ENCODE measurements at regions of chr12 and their contacts with region 1.

Region 1: GRCh38 chr12:122265931-122266771 is at the start of gene VPS33A:
- DNase-seq: peak; percentile 91
- ATAC-seq: peak; percentile 97
- H3K4me3 ChIP-seq: peak within 1 kb of the TSS; percentile 74
- H3K27ac ChIP-seq: peak within 1 kb of the TSS; percentile 84
- H3K4me1 ChIP-seq: 0 out of 2 replicates have a peak, but pooled peaks cover 4% of the 10 kb centered on the region
- H3K27me3 ChIP-seq: no peaks in the 10 kb centered on the region
- CTCF ChIP-seq: no peak
- EP300 ChIP-seq: no peak
- POLR2A ChIP-seq: peak; percentile 97
- RAD21 ChIP-seq: peak; percentile 16; the same call in 1 of the 2 replicates
- polyA plus RNA-seq, gene VPS33A: 7.7 to 8.7 TPM

Region 2: DNA sequence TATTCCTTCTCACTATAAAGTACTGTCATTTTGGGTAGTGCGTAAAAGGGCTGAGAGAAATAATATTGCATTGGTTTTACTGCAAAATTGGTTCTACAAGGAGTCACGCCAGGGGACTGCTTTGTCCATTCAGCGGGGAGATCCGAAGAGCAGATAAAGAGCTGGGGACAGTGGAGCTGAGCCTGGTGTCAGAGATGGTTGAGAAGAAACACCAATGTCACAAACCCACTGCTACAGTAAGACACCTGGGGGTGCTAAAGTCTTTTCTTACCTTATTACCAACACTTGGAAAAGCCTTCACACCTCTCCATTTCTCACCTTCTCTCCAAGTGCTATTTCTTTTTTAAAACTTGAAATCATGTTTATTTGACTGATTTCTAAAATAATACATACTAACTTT is 106.3 kb before region 1 on chr12:
- CTCF ChIA-PET with region 1: no interaction called
- POLR2A ChIA-PET with region 1: no interaction called
- RAD21 ChIA-PET with region 1: no interaction called
- SMC1A ChIA-PET with region 1: no interaction called
- in situ Hi-C with region 1: no loop called
- intact Hi-C with region 1: no loop called
- DNase-seq: no peak
- ATAC-seq: no peak
- H3K4me3 ChIP-seq: no peak overlapping the region
- H3K27ac ChIP-seq: no peak overlapping the region
- H3K4me1 ChIP-seq: peaks cover 5% of the 10 kb centered on the region
- H3K27me3 ChIP-seq: no peaks in the 10 kb centered on the region
- CTCF ChIP-seq: peak in 1 of 3 experiments; percentile 39; a peak in 2 of 6 replicates
- EP300 ChIP-seq: no peak
- POLR2A ChIP-seq: no peak
- RAD21 ChIP-seq: peak; percentile 68

Region 3: DNA sequence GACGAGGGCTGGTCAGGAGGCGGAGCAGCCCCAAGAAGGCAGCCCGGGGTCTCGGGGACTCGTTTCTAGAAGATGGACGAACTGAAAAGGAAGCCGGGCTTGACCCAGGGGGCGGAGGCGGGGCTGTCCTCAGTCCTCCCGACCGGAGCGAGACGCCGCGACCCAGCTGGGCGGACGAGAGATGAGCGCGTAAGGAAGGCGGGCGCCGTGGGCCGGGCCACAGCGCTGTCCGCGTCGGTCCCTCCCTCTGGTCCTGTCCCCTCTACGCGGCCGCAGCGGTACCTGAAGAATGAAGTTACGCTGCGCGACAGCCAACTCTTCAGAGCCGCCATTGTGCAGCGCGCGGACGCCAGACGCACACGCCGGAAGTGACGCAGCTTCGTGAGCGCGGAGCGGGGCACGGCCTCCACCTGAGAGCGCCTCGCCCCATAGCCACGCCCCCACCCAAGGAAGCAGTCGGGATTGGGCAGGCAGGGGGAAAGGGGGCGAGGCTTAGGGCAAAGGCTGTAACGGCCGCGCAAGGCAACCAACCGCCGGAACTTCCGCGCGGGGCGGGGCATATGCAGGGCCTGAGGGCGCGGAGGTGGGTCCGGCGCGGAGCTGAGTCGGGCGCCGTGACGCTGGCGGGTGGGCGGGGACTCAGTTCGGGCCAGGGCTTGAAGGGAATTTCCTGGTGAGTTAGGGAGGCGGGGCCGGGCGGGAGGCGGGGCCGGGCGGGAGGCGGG is 40.3 kb before region 1 on chr12 and contains the start of gene DIABLO:
- CTCF ChIA-PET with region 1: interaction called, 9 read pairs
- POLR2A ChIA-PET with region 1: interaction called, 5 read pairs
- RAD21 ChIA-PET with region 1: interaction called, 10 read pairs
- SMC1A ChIA-PET with region 1: interaction called, 7 read pairs
- in situ Hi-C with region 1: no loop called
- intact Hi-C with region 1: loop called (anchors 1 kb)
- DNase-seq: peak; percentile 96
- ATAC-seq: peak; percentile 97
- H3K4me3 ChIP-seq: peak within 1 kb of the TSS; percentile 87
- H3K27ac ChIP-seq: peak within 1 kb of the TSS; percentile 91
- H3K4me1 ChIP-seq: peaks cover 16% of the 10 kb centered on the region
- H3K27me3 ChIP-seq: no peaks in the 10 kb centered on the region
- CTCF ChIP-seq: no peak
- EP300 ChIP-seq: no peak; a peak in 1 of 4 replicates
- POLR2A ChIP-seq: peak; percentile 99
- RAD21 ChIP-seq: no peak
- polyA plus RNA-seq, gene DIABLO: 18.3 to 21.1 TPM

Region 4: DNA sequence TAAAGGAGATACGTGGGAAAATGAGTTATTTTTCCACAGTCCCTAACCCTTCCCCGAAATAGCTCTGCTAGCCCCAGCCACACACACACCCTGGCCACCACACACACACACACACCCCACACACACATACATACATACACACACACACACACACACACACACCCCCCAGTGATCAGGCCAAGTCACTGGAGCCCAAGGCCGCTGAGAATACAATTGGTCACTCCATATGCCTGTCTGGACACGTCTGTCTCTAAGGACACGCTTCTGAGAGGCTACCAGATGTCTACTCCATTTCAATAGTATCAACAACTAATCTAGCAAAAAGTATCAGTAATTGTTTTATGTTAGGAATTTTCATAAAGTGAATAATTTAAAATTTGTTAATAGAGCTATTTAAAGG is 27.3 kb before region 1 on chr12:
- CTCF ChIA-PET with region 1: interaction called, 7 read pairs
- POLR2A ChIA-PET with region 1: interaction called, 10 read pairs
- RAD21 ChIA-PET with region 1: interaction called, 7 read pairs
- SMC1A ChIA-PET with region 1: interaction called, 5 read pairs
- in situ Hi-C with region 1: no loop called
- intact Hi-C with region 1: no loop called
- DNase-seq: no peak
- ATAC-seq: no peak
- H3K4me3 ChIP-seq: no peak overlapping the region
- H3K27ac ChIP-seq: no peak overlapping the region
- H3K4me1 ChIP-seq: no peaks in the 10 kb centered on the region
- H3K27me3 ChIP-seq: no peaks in the 10 kb centered on the region
- CTCF ChIP-seq: no peak
- EP300 ChIP-seq: no peak
- POLR2A ChIP-seq: no peak
- RAD21 ChIP-seq: no peak